Testis (tissue), 5 donors: ENCODE measurements at regions of chr22 and their contacts with region 1.

Region 1: DNA sequence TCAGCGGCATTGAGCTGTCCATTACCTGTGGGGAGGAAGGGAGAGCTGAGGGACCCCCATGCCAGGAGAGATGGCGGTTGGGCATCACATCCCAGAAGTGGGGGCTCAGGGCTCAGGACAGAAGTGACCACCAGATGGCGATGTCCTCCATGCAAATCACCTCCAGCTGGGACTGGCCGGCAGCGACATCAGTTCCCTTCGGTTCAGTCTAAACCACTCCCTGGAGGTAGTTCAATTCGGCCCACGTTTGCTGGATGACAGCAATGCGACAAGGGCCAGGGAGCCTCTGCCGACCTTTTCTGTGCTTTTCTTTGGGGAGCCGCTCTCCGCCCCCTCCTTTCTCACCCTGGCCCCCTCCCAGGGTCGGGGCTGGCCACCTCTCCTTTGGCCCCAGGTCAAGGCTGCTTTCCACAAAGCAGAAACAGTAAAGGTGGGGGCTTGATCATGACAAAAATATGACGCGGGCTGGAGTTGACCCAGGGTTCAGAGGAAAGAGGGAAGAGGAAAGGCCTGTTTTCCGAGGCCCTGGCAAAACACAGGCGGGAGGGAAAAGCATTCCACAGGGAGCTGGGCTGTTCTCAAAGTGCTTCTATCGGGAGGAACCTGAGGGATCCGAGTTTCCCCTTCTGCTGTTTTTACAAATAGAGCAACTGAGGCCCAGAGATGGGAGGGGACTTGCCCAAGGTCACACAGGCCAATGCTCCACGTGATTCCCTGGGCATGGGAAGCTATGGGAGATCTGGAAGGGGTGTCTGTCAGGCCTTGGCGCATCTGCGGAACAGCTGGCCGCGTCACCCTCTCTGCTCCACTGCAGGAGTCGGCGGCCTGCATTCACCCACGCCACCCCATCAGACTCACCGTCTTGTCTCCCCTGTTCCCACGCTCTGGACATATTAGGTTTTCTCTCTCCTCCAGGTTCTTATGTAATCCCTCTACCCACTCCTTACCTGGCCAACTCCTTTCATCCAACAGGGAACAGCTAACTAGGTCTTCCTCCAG is 54.7 kb downstream of the FBXO7 start:
- DNase-seq: peak; percentile 94
- H3K4me3 ChIP-seq: no peak overlapping the region
- H3K27ac ChIP-seq: peak overlapping the region; percentile 41 to 84
- H3K4me1 ChIP-seq: peaks cover 32% of the 10 kb centered on the region
- H3K27me3 ChIP-seq: no peaks in the 10 kb centered on the region
- CTCF ChIP-seq: peak; percentile 90 to 94 (median 90)
- POLR2A ChIP-seq: no peak

Region 2: DNA sequence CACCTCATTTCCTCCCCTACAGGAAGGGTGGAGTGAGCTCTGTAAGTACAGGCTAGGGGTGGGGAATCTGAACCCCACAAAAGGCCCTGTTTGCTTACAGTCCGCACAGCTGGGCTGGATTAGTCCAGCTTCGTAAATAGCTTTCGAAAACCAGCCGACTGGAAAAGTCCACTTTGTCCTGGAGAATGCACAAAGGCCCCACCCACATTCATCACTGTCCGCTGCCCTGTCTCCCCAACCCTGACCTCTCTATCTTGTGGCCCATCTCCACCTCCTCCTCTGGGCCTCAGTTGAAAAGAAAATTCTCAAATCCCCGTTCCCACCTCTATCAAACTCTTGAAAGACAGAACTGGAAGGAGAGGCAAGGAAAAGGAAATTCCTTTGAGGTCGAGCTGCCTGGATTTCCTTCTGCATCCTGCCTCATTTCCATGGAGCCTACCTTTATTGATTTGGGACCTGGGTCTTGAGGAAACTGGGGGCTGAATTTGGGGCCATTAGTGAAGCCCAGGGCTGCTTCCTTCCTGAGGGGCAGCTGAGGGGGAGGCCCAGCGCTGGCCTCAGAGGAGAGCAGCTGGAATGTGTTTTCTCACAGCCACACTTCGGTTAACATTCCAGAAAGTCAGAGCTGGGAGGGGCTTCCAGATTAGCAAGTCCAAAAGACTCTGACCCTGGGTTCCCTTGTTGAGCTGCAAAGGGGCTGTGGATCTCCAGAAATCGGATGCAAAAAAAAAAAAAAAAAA is 92.9 kb after region 1 on chr22:
- intact Hi-C with region 1: loop called (anchors 5 kb)
- DNase-seq: peak; percentile 72
- H3K4me3 ChIP-seq: no peak overlapping the region
- H3K27ac ChIP-seq: peak overlapping the region; percentile 69 to 85
- H3K4me1 ChIP-seq: peaks cover 40% of the 10 kb centered on the region
- H3K27me3 ChIP-seq: no peaks in the 10 kb centered on the region
- CTCF ChIP-seq: no peak
- POLR2A ChIP-seq: no peak

Region 3: GRCh38 chr22:32796865-32797573 is 267.7 kb after region 1 on chr22:
- intact Hi-C with region 1: loop called (anchors 2 kb)
- DNase-seq: peak; percentile 84
- H3K4me3 ChIP-seq: no peak overlapping the region
- H3K27ac ChIP-seq: no peak overlapping the region
- H3K4me1 ChIP-seq: peaks cover 14% of the 10 kb centered on the region
- H3K27me3 ChIP-seq: no peaks in the 10 kb centered on the region
- CTCF ChIP-seq: peak; percentile 72 to 90 (median 85)
- POLR2A ChIP-seq: no peak

Region 4: GRCh38 chr22:32850591-32851517 is 321.6 kb after region 1 on chr22:
- intact Hi-C with region 1: loop called (anchors 5 kb)
- DNase-seq: peak; percentile 88
- H3K4me3 ChIP-seq: no peak overlapping the region
- H3K27ac ChIP-seq: peak overlapping the region; percentile 77 to 84
- H3K4me1 ChIP-seq: peaks cover 59% of the 10 kb centered on the region
- H3K27me3 ChIP-seq: no peaks in the 10 kb centered on the region
- CTCF ChIP-seq: no peak
- POLR2A ChIP-seq: no peak

Region 5: GRCh38 chr22:32985899-32986765 is 456.8 kb after region 1 on chr22:
- intact Hi-C with region 1: loop called (anchors 5 kb)
- DNase-seq: peak; percentile 87
- H3K4me3 ChIP-seq: no peak overlapping the region
- H3K27ac ChIP-seq: no peak overlapping the region
- H3K4me1 ChIP-seq: peaks cover 6% of the 10 kb centered on the region
- H3K27me3 ChIP-seq: no peaks in the 10 kb centered on the region
- CTCF ChIP-seq: peak; percentile 73 to 78 (median 75)
- POLR2A ChIP-seq: no peak